GM18951 (cell line): ENCODE measurements at regions of chr2 and their contacts with region 1.

Region 1: GRCh38 chr2:97546711-97547110 is 43.0 kb downstream of the ANKRD36B start:
- POLR2A ChIP-seq: no peak

Region 2: GRCh38 chr2:96208143-96209010 is 1338.3 kb before region 1 on chr2 and contains the start of gene STARD7:
- in situ Hi-C with region 1: no loop called
- POLR2A ChIP-seq: peak; percentile 95

Region 3: DNA sequence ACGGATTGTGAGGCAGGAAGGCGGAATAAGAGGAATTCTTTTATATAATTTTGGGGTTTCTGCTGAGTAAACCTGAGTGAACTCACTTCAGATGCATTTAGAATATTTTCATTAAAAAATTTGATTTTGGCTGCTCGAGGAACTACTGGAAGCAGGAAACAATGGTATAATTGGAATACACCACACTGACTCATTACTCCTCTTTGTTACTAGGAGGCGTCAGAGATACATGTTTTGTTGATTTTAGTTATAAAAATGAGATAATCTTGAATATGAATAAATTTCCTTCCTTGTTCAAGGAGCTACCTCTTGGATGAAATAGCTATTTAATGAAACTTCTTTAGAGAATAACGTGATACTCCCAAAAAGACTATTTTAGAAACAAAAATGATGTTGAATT is 336.4 kb before region 1 on chr2:
- in situ Hi-C with region 1: loop called (anchors 25 kb)
- POLR2A ChIP-seq: no peak